GM12878 (cell line): ENCODE measurements at regions of chr18 and their contacts with region 1.

Region 1: DNA sequence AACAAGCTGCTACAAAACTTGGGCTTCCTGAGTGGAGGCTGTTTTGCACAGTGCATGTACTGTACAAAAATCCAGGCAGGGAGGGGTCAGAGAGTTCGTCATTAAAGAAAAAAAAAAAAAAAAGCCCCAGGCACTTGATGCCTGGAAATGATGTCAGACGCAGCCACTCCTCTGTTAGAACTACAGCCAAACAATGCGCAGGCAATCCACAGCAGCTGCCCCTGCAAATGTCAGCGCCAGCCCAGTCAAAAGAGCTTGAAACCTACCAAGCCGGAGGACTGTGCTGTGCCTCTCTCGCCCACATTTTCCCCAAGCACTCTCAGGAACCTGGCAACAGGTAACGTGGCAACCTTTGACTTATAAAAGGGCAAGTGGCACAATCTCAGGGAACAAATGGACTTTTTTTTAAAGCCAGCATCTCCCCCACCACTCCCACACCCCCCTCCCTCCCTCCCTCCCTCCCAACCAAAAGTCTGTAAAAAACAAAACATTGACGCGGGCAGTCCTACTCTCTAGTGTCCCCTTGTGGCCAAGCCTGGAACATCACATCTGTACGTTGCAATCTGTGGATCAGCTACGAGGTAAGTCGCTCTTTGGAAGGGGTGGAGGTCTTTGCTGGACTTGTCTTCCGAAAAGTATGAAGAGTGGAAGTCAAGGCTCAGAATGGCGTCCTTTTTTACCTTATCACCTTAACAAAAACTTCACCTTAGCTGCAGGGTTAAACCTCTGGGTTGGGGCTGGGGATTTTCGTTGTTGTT is 144.1 kb downstream of the TGIF1 start:
- DNase-seq: peak; percentile 81
- ATAC-seq: peak; percentile 72
- H3K4me3 ChIP-seq: peak overlapping the region; percentile 43; the same call in 1 of the 2 replicates
- H3K27ac ChIP-seq: peak overlapping the region; percentile 90
- H3K4me1 ChIP-seq: peaks cover 37% of the 10 kb centered on the region
- H3K27me3 ChIP-seq: no peaks in the 10 kb centered on the region
- CTCF ChIP-seq: peak; percentile 82 to 95 (median 83)
- EP300 ChIP-seq: peak in 1 of 2 experiments; percentile 53; a peak in 2 of 4 replicates
- POLR2A ChIP-seq: peak; percentile 81
- RAD21 ChIP-seq: peak; percentile 79

Region 2: GRCh38 chr18:2971741-2972552 is 622.1 kb before region 1 on chr18:
- CTCF ChIA-PET with region 1: no interaction called
- POLR2A ChIA-PET with region 1: interaction called, 5 read pairs
- RAD21 ChIA-PET with region 1: no interaction called
- SMC1A ChIA-PET with region 1: no interaction called
- in situ Hi-C with region 1: loop called (anchors 10 kb)
- intact Hi-C with region 1: no loop called
- DNase-seq: peak; percentile 90
- ATAC-seq: peak; percentile 89
- H3K4me3 ChIP-seq: peak overlapping the region; percentile 60
- H3K27ac ChIP-seq: peak overlapping the region; percentile 94
- H3K4me1 ChIP-seq: peaks cover 51% of the 10 kb centered on the region
- H3K27me3 ChIP-seq: no peaks in the 10 kb centered on the region
- CTCF ChIP-seq: no peak
- EP300 ChIP-seq: peak; percentile 32 to 48; a peak in 1 of 4 replicates
- POLR2A ChIP-seq: peak; percentile 78
- RAD21 ChIP-seq: no peak

Region 3: DNA sequence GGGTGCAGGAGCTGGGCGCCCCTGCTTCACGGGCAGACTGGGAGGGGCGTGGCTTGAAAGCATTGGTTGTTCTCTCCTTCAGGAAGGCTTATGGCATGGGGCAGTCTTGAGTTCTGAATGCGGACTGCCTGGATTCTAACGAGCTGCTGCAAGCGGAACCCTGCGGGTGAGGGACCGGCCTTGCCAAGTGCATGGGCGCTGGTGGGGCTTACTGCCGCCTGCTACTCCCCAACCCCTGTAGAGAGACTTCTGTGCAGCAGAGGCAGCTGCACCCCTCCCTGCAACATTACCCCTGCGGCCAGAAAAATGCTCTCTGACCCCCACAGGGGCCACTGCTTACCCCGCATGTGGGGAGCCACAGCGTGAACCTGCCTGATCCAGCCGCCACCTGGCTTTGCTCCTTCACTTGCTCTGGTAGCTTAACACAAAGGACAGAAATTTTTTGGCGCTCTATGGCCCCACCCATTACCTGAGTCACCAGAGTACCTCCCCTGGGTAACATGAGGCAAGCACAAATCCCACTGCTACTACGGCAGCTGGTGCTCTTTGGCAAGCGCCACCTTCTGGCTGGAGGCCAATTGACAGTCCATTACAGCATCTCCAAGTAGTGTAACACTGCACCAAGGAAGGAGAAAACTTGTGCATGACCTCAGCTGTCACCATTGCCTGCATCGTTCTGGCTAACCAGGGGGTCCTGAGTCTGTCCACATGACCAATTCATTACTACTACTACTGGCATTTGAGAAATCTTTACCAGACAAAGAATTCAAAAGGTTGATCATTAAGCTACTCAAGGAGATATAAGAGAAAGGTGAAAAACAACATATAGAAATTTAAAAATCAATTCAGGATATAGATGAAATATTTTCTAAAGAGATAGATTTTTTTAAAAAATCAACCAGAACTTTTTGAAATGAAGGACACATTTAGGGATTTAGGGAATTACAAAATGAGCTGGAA is 296.8 kb before region 1 on chr18:
- CTCF ChIA-PET with region 1: interaction called, 10 read pairs
- POLR2A ChIA-PET with region 1: no interaction called
- RAD21 ChIA-PET with region 1: interaction called, 8 read pairs
- SMC1A ChIA-PET with region 1: interaction called, 7 read pairs
- in situ Hi-C with region 1: no loop called
- intact Hi-C with region 1: no loop called
- DNase-seq: peak; percentile 69
- ATAC-seq: peak; percentile 99
- H3K4me3 ChIP-seq: peak overlapping the region; percentile 71
- H3K27ac ChIP-seq: peak overlapping the region; percentile 33
- H3K4me1 ChIP-seq: peaks cover 5% of the 10 kb centered on the region; the same call in 1 of the 2 replicates
- H3K27me3 ChIP-seq: no peaks in the 10 kb centered on the region; a peak in 1 of 4 replicates
- CTCF ChIP-seq: peak; percentile 74 to 92 (median 77)
- EP300 ChIP-seq: no peak
- POLR2A ChIP-seq: peak; percentile 90
- RAD21 ChIP-seq: peak; percentile 41

Region 4: DNA sequence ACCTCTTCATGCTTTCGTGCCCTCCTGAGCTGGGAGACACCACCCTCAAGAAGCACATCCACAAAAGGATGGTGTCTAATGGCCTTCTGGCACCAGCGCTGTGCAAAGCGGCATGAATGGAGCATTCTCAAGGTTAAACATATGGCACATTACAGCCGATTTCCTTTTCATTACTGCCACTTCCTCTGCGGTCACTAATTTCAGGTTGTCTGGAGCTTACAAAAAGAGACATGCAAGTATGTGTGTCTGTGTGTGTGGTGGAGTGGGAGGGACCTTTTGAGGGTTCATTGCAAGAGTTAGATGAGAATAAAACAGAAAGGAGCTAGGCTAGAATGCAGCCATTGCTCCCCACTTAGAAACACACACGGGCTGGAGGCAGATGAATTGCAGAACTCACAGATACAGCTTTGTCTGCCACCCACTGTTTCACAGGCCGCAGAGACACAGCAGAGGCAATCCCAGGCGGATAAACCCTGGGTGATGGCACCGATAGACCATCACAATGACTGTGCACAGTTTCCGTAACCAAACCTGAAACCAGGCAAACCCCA is 68.1 kb before region 1 on chr18:
- CTCF ChIA-PET with region 1: interaction called, 23 read pairs
- POLR2A ChIA-PET with region 1: interaction called, 8 read pairs
- RAD21 ChIA-PET with region 1: interaction called, 24 read pairs
- SMC1A ChIA-PET with region 1: interaction called, 22 read pairs
- in situ Hi-C with region 1: no loop called
- intact Hi-C with region 1: no loop called
- DNase-seq: peak; percentile 65
- ATAC-seq: peak; percentile 83
- H3K4me3 ChIP-seq: peak overlapping the region; percentile 16
- H3K27ac ChIP-seq: no peak overlapping the region
- H3K4me1 ChIP-seq: peaks cover 12% of the 10 kb centered on the region
- H3K27me3 ChIP-seq: no peaks in the 10 kb centered on the region
- CTCF ChIP-seq: no peak
- EP300 ChIP-seq: peak; percentile 73 to 82; a peak in 2 of 4 replicates
- POLR2A ChIP-seq: no peak
- RAD21 ChIP-seq: 0 out of 2 replicates have a peak, but pooled peaks have one; percentile 3

Region 5: GRCh38 chr18:3660739-3661515 is 66.8 kb after region 1 on chr18:
- CTCF ChIA-PET with region 1: interaction called, 96 read pairs
- POLR2A ChIA-PET with region 1: interaction called, 4 read pairs
- RAD21 ChIA-PET with region 1: interaction called, 56 read pairs
- SMC1A ChIA-PET with region 1: interaction called, 59 read pairs
- in situ Hi-C with region 1: no loop called
- intact Hi-C with region 1: loop called (anchors 1 kb)
- DNase-seq: no peak
- ATAC-seq: peak; percentile 55
- H3K4me3 ChIP-seq: no peak overlapping the region
- H3K27ac ChIP-seq: no peak overlapping the region
- H3K4me1 ChIP-seq: peaks cover 8% of the 10 kb centered on the region
- H3K27me3 ChIP-seq: no peaks in the 10 kb centered on the region
- CTCF ChIP-seq: no peak
- EP300 ChIP-seq: no peak
- POLR2A ChIP-seq: no peak
- RAD21 ChIP-seq: no peak